ENCODE measurements at regions of chr7 and their contacts with region 1.

Region 1: GRCh38 chr7:140175221-140176121 is 1.3 kb downstream of the KDM7A start:
- DNase-seq: peak; percentile 91 to 95 (median 93)
- ATAC-seq: peak; percentile 75 to 87 (median 79)
- H3K4me3 ChIP-seq: peak overlapping the region; percentile 56 to 98 (median 90)
- H3K27ac ChIP-seq: peak overlapping the region; percentile 76 to 100 (median 100)
- H3K4me1 ChIP-seq: peaks cover 0 to 41% (median 19%) of the 10 kb centered on the region in 12 donors
- H3K27me3 ChIP-seq: no peaks in the 10 kb centered on the region
- CTCF ChIP-seq: peak; percentile 67 to 89 (median 76)
- POLR2A ChIP-seq: peak; percentile 71 to 97

Region 2: DNA sequence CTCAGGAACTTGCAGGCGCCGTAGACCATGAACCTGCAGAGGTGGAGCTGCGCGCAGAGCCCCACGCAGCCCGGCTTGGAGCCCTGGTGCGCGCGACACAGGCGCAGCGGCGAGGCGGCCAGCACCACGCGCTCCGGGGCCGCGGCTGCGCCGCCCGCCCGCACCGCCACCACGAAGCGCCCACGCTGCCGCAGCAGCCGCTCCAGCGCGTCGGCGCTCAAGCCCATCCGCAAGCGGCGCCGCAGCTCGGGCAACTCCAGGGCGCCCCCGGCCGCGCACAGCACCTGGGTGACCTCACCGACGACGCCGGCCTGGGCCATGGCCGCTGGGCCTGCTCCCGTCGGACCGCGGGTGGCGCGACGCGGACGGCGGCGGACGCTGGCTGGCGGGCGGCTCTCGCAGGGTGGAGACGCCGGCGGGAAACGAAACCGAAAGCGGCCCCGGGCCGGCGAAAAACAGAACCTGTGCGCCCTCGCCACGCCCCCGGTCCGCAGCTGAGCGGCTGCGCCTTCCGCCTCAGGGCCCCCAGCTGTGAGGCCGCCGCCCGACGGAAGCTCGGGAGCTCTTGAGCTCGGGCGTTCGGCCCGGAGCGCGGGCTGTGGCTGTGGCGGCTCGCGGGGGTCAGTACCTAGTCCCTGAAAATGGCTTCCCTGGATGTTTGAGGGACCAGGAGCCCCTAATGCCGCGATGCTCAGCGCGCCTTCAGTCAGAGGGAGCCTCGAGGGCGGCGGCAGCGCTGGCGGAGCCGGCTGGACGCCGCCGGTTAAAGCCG is 112.8 kb before region 1 on chr7 and contains the start of gene PARP12:
- intact Hi-C with region 1: loop called in 3 of 10 experiments (anchors 5 to 10 kb)
- DNase-seq: peak; percentile 93 to 96 (median 94)
- ATAC-seq: peak; percentile 33 to 85 (median 81)
- H3K4me3 ChIP-seq: peak within 1 kb of the TSS; percentile 31 to 90 (median 76)
- H3K27ac ChIP-seq: peak within 1 kb of the TSS; percentile 42 to 99 (median 90)
- H3K4me1 ChIP-seq: peaks cover 7 to 52% (median 31%) of the 10 kb centered on the region in 12 donors
- H3K27me3 ChIP-seq: no peaks in the 10 kb centered on the region
- CTCF ChIP-seq: peak in 1 of 12 donors; percentile 16
- POLR2A ChIP-seq: peak in 1 of 2 donors; percentile 45
- total RNA-seq, gene PARP12: 9.7 to 65.9 (median 15.3) TPM

Region 3: GRCh38 chr7:140225562-140226249 is 50.2 kb after region 1 on chr7:
- intact Hi-C with region 1: loop called in 4 of 10 experiments (anchors 2 to 5 kb)
- DNase-seq: no peak
- ATAC-seq: no peak
- H3K4me3 ChIP-seq: no peak overlapping the region
- H3K27ac ChIP-seq: no peak overlapping the region
- H3K4me1 ChIP-seq: peaks cover 0 to 25% (median 4%) of the 10 kb centered on the region in 12 donors
- H3K27me3 ChIP-seq: peaks cover 0 to 7% (median 0%) of the 10 kb centered on the region in 9 donors
- CTCF ChIP-seq: no peak
- POLR2A ChIP-seq: no peak

Region 4: GRCh38 chr7:140304191-140304799 is 128.8 kb after region 1 on chr7:
- intact Hi-C with region 1: loop called in 2 of 10 experiments (anchors 1 kb)
- DNase-seq: no peak
- ATAC-seq: peak in 3 of 4 donors; percentile 56 to 83 (median 70)
- H3K4me3 ChIP-seq: no peak overlapping the region
- H3K27ac ChIP-seq: no peak overlapping the region
- H3K4me1 ChIP-seq: peaks cover 0 to 13% (median 0%) of the 10 kb centered on the region in 12 donors
- H3K27me3 ChIP-seq: no peaks in the 10 kb centered on the region
- CTCF ChIP-seq: peak; percentile 33 to 59 (median 50)
- POLR2A ChIP-seq: no peak

Region 5: GRCh38 chr7:140326116-140326928 is 150.9 kb after region 1 on chr7:
- intact Hi-C with region 1: loop called (anchors 1 to 10 kb)
- DNase-seq: peak; percentile 51 to 69 (median 66)
- ATAC-seq: peak; percentile 66 to 95 (median 92)
- H3K4me3 ChIP-seq: peak overlapping the region in 5 of 12 donors; percentile 11 to 32 (median 19)
- H3K27ac ChIP-seq: peak overlapping the region in 1 of 12 donors; percentile 39
- H3K4me1 ChIP-seq: peaks cover 0 to 13% (median 5%) of the 10 kb centered on the region in 12 donors
- H3K27me3 ChIP-seq: no peaks in the 10 kb centered on the region
- CTCF ChIP-seq: peak; percentile 41 to 80 (median 65)
- POLR2A ChIP-seq: no peak